ENCODE measurements at regions of chr10 and their contacts with region 1.

Region 1: DNA sequence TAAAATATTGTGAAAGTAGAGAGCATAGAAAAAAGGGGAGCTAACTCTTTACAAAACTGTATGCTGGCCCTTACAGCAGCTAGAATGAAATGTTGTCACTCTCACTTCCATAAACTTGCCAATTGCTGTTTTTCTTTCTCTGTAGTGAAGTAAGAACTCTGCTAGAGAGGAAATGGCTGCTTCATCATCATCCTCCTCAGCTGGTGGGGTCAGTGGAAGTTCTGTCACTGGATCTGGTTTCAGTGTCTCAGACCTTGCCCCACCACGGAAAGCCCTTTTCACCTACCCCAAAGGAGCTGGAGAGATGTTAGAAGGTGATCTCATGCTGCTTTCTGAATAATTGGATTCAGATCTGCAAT is 7.6 kb upstream of the ASCC1 start:
- DNase-seq: no peak
- H3K4me3 ChIP-seq: no peak overlapping the region
- H3K27ac ChIP-seq: peak overlapping the region; percentile 23; the same call in 1 of the 2 replicates
- H3K4me1 ChIP-seq: peaks cover 13% of the 10 kb centered on the region
- H3K27me3 ChIP-seq: no peaks in the 10 kb centered on the region
- CTCF ChIP-seq: no peak

Region 2: DNA sequence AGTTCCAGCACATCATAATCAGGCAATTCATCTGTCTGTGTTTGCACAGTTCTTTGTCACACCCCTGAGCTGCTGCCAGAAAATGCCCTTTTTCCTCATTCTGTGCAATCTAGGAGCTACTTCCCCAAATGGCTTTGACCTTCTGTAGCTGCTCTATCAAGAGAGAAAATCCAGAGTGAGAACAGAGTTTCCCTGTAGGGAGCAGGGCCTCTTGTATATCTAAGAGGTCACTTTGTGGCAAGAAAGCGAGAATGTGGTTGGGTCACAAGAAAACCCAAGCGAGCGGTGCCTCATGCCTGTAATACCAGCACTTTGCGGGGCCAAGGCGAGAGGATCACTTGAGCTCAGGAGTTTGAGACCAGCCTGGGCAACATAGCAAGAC is 880.3 kb before region 1 on chr10:
- CTCF ChIA-PET with region 1: no interaction called
- POLR2A ChIA-PET with region 1: interaction called, 14 read pairs
- intact Hi-C with region 1: no loop called
- DNase-seq: peak; percentile 75 to 98
- H3K4me3 ChIP-seq: no peak overlapping the region
- H3K27ac ChIP-seq: peak overlapping the region; percentile 81
- H3K4me1 ChIP-seq: peaks cover 86% of the 10 kb centered on the region
- H3K27me3 ChIP-seq: no peaks in the 10 kb centered on the region
- CTCF ChIP-seq: no peak

Region 3: GRCh38 chr10:72126184-72126871 is 97.4 kb before region 1 on chr10:
- CTCF ChIA-PET with region 1: interaction called, 10 read pairs
- POLR2A ChIA-PET with region 1: interaction called, 8 read pairs
- intact Hi-C with region 1: no loop called
- DNase-seq: no peak
- H3K4me3 ChIP-seq: no peak overlapping the region
- H3K27ac ChIP-seq: no peak overlapping the region
- H3K4me1 ChIP-seq: no peaks in the 10 kb centered on the region
- H3K27me3 ChIP-seq: no peaks in the 10 kb centered on the region
- CTCF ChIP-seq: peak; percentile 71

Region 4: GRCh38 chr10:72278668-72279393 is 55.1 kb after region 1 on chr10:
- CTCF ChIA-PET with region 1: interaction called, 17 read pairs
- POLR2A ChIA-PET with region 1: no interaction called
- intact Hi-C with region 1: no loop called
- DNase-seq: no peak
- H3K4me3 ChIP-seq: no peak overlapping the region
- H3K27ac ChIP-seq: peak overlapping the region; percentile 83; the same call in 1 of the 2 replicates
- H3K4me1 ChIP-seq: peaks cover 25% of the 10 kb centered on the region
- H3K27me3 ChIP-seq: no peaks in the 10 kb centered on the region
- CTCF ChIP-seq: peak; percentile 31; the same call in 1 of the 2 replicates

Region 5: GRCh38 chr10:72354478-72355213 is 130.9 kb after region 1 on chr10 and contains the start of gene DNAJB12:
- CTCF ChIA-PET with region 1: interaction called, 13 read pairs
- POLR2A ChIA-PET with region 1: no interaction called
- intact Hi-C with region 1: no loop called
- DNase-seq: peak; percentile 90 to 92
- H3K4me3 ChIP-seq: peak within 1 kb of the TSS; percentile 85
- H3K27ac ChIP-seq: peak within 1 kb of the TSS; percentile 90
- H3K4me1 ChIP-seq: peaks cover 16% of the 10 kb centered on the region
- H3K27me3 ChIP-seq: no peaks in the 10 kb centered on the region
- CTCF ChIP-seq: no peak
- total RNA-seq, gene DNAJB12: 37.0 and 46.9 TPM in 2 replicates

Region 6: GRCh38 chr10:72466018-72466417 is 242.3 kb after region 1 on chr10:
- CTCF ChIA-PET with region 1: no interaction called
- POLR2A ChIA-PET with region 1: no interaction called
- intact Hi-C with region 1: no loop called
- DNase-seq: no peak
- H3K4me3 ChIP-seq: no peak overlapping the region
- H3K27ac ChIP-seq: no peak overlapping the region
- H3K4me1 ChIP-seq: no peaks in the 10 kb centered on the region
- H3K27me3 ChIP-seq: no peaks in the 10 kb centered on the region
- CTCF ChIP-seq: no peak